Left lung (tissue), 14 donors: ENCODE measurements at regions of chr14 and their contacts with region 1.

Region 1: DNA sequence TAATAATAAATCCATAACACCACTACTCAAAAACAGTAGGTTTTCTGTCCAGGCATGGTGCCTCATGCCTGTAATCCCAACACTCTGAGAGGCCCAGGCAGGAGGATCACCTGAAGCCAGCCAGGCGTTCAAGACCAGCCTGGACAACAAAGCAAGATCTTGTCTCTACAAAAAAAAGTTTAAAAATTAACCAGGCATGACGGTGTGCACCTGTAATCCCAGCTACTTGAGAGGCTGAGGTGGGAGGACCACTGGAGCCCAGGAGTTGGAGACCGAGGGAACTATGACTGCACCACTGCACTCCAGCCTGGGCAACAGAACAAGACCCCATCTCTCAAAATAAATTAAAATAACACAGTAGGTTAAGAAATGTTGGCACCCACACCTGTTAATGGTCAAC is 44.5 kb upstream of the AP4S1 start:
- DNase-seq: no peak
- ATAC-seq: no peak
- H3K4me3 ChIP-seq: no peak overlapping the region
- H3K27ac ChIP-seq: no peak overlapping the region
- H3K4me1 ChIP-seq: peaks cover under 1 to 21% of the 10 kb centered on the region in 2 donors
- H3K27me3 ChIP-seq: no peaks in the 10 kb centered on the region
- CTCF ChIP-seq: no peak

Region 2: GRCh38 chr14:31083781-31084180 is 102.8 kb after region 1 on chr14:
- intact Hi-C with region 1: loop called in 1 of 2 experiments (anchors 2 kb)
- DNase-seq: no peak
- ATAC-seq: no peak
- H3K4me3 ChIP-seq: no peak overlapping the region
- H3K27ac ChIP-seq: no peak overlapping the region
- H3K4me1 ChIP-seq: no peaks in the 10 kb centered on the region
- H3K27me3 ChIP-seq: no peaks in the 10 kb centered on the region
- CTCF ChIP-seq: no peak